B cell (primary cell): ENCODE measurements at regions of chr17 and their contacts with region 1.

Region 1: DNA sequence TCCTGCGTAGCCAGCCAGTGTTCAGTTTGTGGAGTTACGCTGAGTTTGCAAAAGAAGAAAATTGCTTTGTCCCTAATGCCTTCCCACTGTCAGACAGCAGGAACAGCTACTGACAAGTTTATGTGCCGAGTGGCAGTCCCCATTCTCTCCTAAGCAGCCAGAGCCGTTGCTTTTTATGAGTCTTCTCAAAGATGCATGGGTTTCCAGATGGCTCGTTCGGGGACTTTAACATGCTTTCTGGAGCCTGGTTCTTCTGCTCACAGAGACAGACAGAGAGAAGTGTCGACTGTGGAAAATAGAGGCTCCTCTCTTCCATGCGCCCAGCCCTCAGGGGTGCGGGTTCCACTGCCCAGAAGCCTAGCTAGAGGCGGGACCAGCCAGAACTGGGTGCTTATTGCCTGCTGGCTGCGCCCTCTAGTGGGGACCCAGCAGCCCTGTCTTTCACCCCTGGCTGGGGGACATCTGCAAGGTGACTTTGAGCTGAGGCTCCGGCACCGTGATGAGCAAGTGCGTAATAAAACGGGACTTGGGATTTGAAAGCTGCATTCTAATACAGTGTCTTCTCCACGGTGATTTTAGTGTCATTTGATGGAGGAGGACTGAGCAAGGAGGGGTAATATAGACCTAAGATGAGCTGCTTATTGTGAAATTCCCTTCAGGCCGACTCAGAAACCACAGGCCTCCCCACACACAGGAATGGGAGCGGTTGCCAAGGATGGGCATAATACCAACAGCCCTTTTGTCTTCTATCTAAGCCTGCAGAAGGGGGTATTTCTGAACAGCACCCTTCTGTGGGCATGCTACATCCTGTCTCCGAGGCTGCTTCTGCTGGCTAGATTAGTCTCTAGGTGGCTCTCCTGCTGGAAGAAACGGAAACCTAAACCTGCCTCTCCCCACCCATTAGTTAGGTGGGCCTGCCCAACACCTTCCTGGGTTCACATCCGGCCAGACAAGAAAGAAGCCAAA is 73.1 kb downstream of the CCDC182 start:
- DNase-seq: peak; percentile 81
- ATAC-seq: peak; percentile 97
- H3K4me3 ChIP-seq: no peak overlapping the region
- H3K4me3 Mint-ChIP-seq: no peak overlapping the region
- H3K27ac ChIP-seq: no peak overlapping the region
- H3K27ac Mint-ChIP-seq: no peak overlapping the region
- H3K4me1 ChIP-seq: peaks cover 1 to 7% of the 10 kb centered on the region in 2 donors
- H3K4me1 Mint-ChIP-seq: peaks cover 9% of the 10 kb centered on the region
- H3K27me3 ChIP-seq: no peaks in the 10 kb centered on the region
- H3K27me3 Mint-ChIP-seq: no peaks in the 10 kb centered on the region
- CTCF ChIP-seq: peak; percentile 95

Region 2: GRCh38 chr17:57130761-57131461 is 541.0 kb before region 1 on chr17:
- CTCF ChIA-PET with region 1: no interaction called
- POLR2A ChIA-PET with region 1: no interaction called
- intact Hi-C with region 1: loop called (anchors 5 kb)
- DNase-seq: peak; percentile 85
- ATAC-seq: peak; percentile 98
- H3K4me3 ChIP-seq: no peak overlapping the region
- H3K4me3 Mint-ChIP-seq: no peak overlapping the region
- H3K27ac ChIP-seq: no peak overlapping the region
- H3K27ac Mint-ChIP-seq: no peak overlapping the region
- H3K4me1 ChIP-seq: peaks cover 8 to 14% of the 10 kb centered on the region in 2 donors
- H3K4me1 Mint-ChIP-seq: peaks cover 15% of the 10 kb centered on the region
- H3K27me3 ChIP-seq: no peaks in the 10 kb centered on the region
- H3K27me3 Mint-ChIP-seq: peaks cover 22% of the 10 kb centered on the region
- CTCF ChIP-seq: peak; percentile 87

Region 3: DNA sequence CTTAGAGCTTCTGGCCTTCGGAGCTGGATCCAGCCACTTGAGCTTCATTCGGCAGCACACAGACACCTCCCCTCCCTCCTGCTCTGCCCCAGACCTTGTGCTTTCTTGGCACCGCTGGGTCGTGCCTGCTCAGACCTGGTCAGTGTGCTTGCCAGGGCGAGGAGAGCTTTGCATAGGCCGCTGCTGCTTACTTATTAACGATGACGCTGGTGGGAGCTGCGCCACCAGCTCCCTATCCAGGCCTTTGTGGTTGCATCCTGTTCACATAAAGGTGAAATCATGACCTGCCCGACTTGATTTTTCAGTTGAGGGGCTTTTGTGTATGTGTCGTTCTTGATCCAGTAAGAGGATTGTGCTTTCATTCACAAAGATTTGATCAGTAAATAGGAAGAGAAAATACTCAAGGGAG is 314.5 kb before region 1 on chr17:
- CTCF ChIA-PET with region 1: interaction called, 11 read pairs
- POLR2A ChIA-PET with region 1: no interaction called
- intact Hi-C with region 1: no loop called
- DNase-seq: peak; percentile 29
- ATAC-seq: no peak
- H3K4me3 ChIP-seq: peak overlapping the region in 4 of 5 experiments; percentile 14 to 52 (median 26)
- H3K4me3 Mint-ChIP-seq: peak overlapping the region; percentile 84
- H3K27ac ChIP-seq: peak overlapping the region; percentile 43 to 59
- H3K27ac Mint-ChIP-seq: peak overlapping the region; percentile 78
- H3K4me1 ChIP-seq: peaks cover 40 to 44% of the 10 kb centered on the region in 2 donors
- H3K4me1 Mint-ChIP-seq: peaks cover 53% of the 10 kb centered on the region
- H3K27me3 ChIP-seq: no peaks in the 10 kb centered on the region
- H3K27me3 Mint-ChIP-seq: no peaks in the 10 kb centered on the region
- CTCF ChIP-seq: no peak

Region 4: GRCh38 chr17:57597531-57598453 is 74.2 kb before region 1 on chr17:
- CTCF ChIA-PET with region 1: interaction called, 85 read pairs
- POLR2A ChIA-PET with region 1: no interaction called
- intact Hi-C with region 1: no loop called
- DNase-seq: peak; percentile 41
- ATAC-seq: no peak
- H3K4me3 ChIP-seq: no peak overlapping the region
- H3K4me3 Mint-ChIP-seq: no peak overlapping the region
- H3K27ac ChIP-seq: no peak overlapping the region
- H3K27ac Mint-ChIP-seq: peak overlapping the region; percentile 69
- H3K4me1 ChIP-seq: peaks cover 21 to 26% of the 10 kb centered on the region in 2 donors
- H3K4me1 Mint-ChIP-seq: peaks cover 31% of the 10 kb centered on the region
- H3K27me3 ChIP-seq: no peaks in the 10 kb centered on the region
- H3K27me3 Mint-ChIP-seq: no peaks in the 10 kb centered on the region
- CTCF ChIP-seq: peak; percentile 68

Region 5: GRCh38 chr17:57622683-57623433 is 49.1 kb before region 1 on chr17:
- CTCF ChIA-PET with region 1: interaction called, 33 read pairs
- POLR2A ChIA-PET with region 1: no interaction called
- intact Hi-C with region 1: loop called (anchors 1 kb)
- DNase-seq: peak; percentile 73
- ATAC-seq: peak; percentile 78
- H3K4me3 ChIP-seq: peak overlapping the region in 4 of 5 experiments; percentile 32 to 64 (median 49)
- H3K4me3 Mint-ChIP-seq: peak overlapping the region; percentile 81
- H3K27ac ChIP-seq: peak overlapping the region; percentile 59 to 73
- H3K27ac Mint-ChIP-seq: peak overlapping the region; percentile 85
- H3K4me1 ChIP-seq: peaks cover 34 to 42% of the 10 kb centered on the region in 2 donors
- H3K4me1 Mint-ChIP-seq: peaks cover 45% of the 10 kb centered on the region
- H3K27me3 ChIP-seq: no peaks in the 10 kb centered on the region
- H3K27me3 Mint-ChIP-seq: no peaks in the 10 kb centered on the region
- CTCF ChIP-seq: no peak

Region 6: GRCh38 chr17:57640079-57640478 is 31.9 kb before region 1 on chr17:
- CTCF ChIA-PET with region 1: interaction called, 12 read pairs
- POLR2A ChIA-PET with region 1: no interaction called
- intact Hi-C with region 1: no loop called
- DNase-seq: no peak
- ATAC-seq: no peak
- H3K4me3 ChIP-seq: no peak overlapping the region
- H3K4me3 Mint-ChIP-seq: no peak overlapping the region
- H3K27ac ChIP-seq: no peak overlapping the region
- H3K27ac Mint-ChIP-seq: no peak overlapping the region
- H3K4me1 ChIP-seq: peaks cover 7 to 23% of the 10 kb centered on the region in 2 donors
- H3K4me1 Mint-ChIP-seq: peaks cover 20% of the 10 kb centered on the region
- H3K27me3 ChIP-seq: no peaks in the 10 kb centered on the region
- H3K27me3 Mint-ChIP-seq: no peaks in the 10 kb centered on the region
- CTCF ChIP-seq: no peak

Region 7: GRCh38 chr17:57833179-57833939 is 161.4 kb after region 1 on chr17:
- CTCF ChIA-PET with region 1: interaction called, 10 read pairs
- POLR2A ChIA-PET with region 1: no interaction called
- intact Hi-C with region 1: no loop called
- DNase-seq: peak; percentile 81
- ATAC-seq: peak; percentile 62
- H3K4me3 ChIP-seq: peak overlapping the region; percentile 36 to 83 (median 58)
- H3K4me3 Mint-ChIP-seq: no peak overlapping the region
- H3K27ac ChIP-seq: no peak overlapping the region
- H3K27ac Mint-ChIP-seq: no peak overlapping the region
- H3K4me1 ChIP-seq: peaks cover 8 to 12% of the 10 kb centered on the region in 2 donors
- H3K4me1 Mint-ChIP-seq: peaks cover 2% of the 10 kb centered on the region
- H3K27me3 ChIP-seq: no peaks in the 10 kb centered on the region
- H3K27me3 Mint-ChIP-seq: no peaks in the 10 kb centered on the region
- CTCF ChIP-seq: peak; percentile 96